HEK293T (cell line): ENCODE measurements at regions of chr10 and their contacts with region 1.

Region 1: DNA sequence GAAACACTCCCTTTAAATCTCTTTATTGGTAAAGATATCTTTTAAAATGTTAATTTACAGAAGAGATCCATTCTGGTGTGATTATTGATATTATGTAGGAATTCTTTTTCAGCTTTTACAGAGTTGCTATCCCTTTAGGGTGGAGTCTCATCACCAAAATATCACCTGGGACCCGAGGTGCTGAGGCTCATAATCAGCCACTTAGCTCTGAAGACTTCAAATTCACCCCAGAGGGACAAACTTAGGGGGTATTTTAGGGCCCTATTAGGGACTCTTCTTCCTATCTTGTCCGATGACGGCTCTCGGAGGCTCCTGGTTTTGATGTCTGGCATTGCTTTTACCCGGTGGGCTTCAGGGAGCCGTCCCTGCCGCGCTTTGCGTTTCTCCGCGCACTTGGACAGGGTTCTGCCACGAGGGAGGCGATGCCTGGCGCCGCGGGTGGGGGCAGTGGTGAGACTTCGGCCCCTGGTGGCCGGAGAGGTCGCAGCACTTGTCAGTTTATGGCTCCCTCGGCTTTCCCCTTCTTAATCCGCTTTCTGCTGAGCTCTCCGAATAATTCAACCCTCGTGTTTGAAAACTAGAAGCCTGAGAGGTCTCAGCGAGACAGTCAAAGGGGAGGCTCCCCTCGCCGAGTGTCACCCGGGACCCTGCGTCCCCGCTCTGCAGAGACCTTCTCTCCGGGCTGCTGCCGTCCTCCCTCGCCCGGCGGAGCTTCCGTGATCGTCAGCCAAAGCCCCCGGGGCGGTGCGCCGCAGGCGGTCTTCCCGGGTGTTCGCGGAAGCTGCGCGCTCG is 27.8 kb downstream of the RBM20 start:
- DNase-seq: peak; percentile 90

Region 2: DNA sequence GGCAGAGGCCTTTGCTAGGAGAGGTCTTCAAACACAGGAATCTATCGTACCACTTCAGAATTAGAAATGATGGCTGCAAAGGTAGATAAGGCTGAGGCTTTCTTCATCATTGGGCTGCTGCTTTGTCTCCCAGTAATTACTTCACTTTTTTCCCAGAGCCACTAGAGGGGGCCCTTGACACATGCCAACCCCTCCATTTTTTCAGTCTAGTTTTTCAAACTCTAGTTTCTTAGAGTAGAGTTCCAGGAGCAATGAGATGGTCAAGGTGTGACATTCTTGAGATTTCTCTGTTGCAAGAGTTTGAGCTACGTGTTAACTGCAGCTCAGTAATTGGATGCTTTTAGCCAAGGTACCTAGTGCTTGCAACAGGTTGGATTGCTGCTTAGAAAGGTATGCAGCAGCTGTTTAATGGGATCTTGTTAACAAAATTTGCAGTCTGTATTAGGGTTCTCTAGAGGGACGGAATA is 61.6 kb before region 1 on chr10:
- CTCF ChIA-PET with region 1: interaction called, 11 read pairs
- POLR2A ChIA-PET with region 1: no interaction called
- DNase-seq: peak; percentile 76

Region 3: GRCh38 chr10:110641256-110641655 is 30.7 kb before region 1 on chr10:
- CTCF ChIA-PET with region 1: interaction called, 11 read pairs
- POLR2A ChIA-PET with region 1: interaction called, 10 read pairs
- DNase-seq: no peak

Region 4: GRCh38 chr10:110648692-110649346 is 23.2 kb before region 1 on chr10:
- CTCF ChIA-PET with region 1: interaction called, 8 read pairs
- POLR2A ChIA-PET with region 1: interaction called, 10 read pairs
- DNase-seq: no peak